Left cardiac atrium (tissue), 4 donors: ENCODE measurements at regions of chr12 and their contacts with region 1.

Region 1: DNA sequence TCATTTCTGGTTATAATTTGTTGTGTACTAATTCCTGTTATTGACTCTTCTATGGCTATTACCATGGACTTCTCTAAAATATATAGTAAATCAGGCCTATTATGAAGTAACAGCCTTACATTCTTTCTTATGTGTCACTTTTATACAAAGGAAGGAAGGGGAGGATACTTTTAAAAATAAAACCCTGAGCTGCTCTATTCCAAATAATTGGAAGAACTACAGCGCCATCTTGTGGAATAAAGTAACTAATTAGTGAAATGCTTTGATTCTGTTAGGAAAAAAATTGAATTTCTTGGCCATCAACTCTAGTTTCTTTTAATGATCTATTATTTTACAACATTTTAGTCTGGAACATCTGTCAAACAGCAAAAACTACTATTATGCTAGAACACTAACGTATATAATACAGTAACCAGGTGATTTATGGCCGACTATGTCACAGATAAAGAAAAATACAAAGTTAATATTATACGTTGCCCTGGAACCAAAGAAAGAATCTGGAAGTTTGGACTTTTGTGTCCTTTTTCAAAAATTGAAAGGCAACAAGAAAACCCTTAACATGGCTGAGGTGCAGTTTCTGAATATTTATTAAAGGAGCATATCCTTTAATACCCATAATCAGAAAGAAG is 55.0 kb upstream of the NELL2 start:
- DNase-seq: no peak
- ATAC-seq: peak; percentile 52 to 57

Region 2: DNA sequence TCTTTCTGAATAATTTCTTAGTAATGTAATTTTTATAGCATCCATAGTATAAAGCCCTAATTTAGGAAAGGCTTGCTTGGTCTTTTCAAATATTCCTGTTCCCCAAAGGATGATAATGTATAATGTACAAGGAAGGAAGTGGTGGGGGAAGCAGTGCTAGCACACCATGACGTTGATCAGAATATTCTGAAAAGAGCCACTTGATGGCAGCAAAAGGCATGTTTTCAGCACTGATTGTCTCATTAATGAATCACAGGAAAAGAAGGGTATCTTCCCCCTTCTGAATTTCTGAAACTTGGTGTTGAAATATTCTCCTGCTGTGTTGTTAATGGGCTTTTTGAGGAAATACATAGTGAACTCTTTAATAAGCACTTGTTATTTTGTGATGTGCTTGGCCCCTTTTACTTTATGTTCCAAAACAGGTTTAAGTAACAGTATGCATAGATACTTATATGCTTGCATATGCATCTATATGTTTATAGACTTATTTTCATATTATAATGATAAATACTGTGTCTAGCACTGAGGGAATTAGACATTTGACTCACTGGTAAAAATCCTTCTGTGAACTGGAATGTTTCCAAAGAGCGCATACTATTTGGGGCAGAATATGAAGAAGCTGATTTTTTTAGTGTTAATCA is 973.2 kb before region 1 on chr12:
- intact Hi-C with region 1: loop called in 1 of 2 experiments (anchors 2 kb)
- DNase-seq: no peak
- ATAC-seq: peak; percentile 61 to 77

Region 3: DNA sequence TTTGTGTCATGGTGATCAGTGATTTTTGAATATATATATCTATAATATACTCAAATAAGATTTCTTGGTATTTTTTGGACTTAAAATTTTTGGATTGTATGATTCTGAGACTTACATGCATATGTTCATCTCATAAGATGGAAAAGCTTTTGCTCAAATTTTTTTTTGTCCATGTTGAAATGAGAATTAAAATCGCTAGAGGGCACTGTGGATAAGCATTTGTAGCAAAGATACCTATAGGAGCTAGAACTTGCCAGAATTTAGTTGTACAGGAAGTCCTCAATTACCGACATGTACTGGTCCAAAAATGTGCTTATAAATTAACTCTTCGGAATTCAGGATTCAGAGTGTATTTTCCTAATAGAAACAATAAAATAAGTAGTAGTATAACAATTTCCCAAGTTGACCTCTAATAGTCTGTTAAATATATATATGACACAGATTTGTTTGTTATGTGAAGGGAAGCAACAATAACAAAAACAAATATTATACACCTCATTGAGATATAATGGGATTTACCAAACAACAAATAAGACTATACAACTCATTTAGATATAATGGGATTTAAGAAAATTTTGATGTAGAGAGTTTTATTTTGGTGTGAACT is 915.6 kb before region 1 on chr12:
- intact Hi-C with region 1: loop called in 1 of 2 experiments (anchors 5 kb)
- DNase-seq: no peak
- ATAC-seq: peak in 1 of 2 donors; percentile 51

Region 4: GRCh38 chr12:44571016-44571550 is 360.0 kb before region 1 on chr12:
- intact Hi-C with region 1: no loop called
- DNase-seq: no peak
- ATAC-seq: no peak

Region 5: GRCh38 chr12:44889162-44889561 is 41.9 kb before region 1 on chr12:
- intact Hi-C with region 1: no loop called
- DNase-seq: no peak
- ATAC-seq: no peak